CD8-positive, alpha-beta T cell (primary cell): ENCODE measurements at regions of chr11 and their contacts with region 1.

Region 1: DNA sequence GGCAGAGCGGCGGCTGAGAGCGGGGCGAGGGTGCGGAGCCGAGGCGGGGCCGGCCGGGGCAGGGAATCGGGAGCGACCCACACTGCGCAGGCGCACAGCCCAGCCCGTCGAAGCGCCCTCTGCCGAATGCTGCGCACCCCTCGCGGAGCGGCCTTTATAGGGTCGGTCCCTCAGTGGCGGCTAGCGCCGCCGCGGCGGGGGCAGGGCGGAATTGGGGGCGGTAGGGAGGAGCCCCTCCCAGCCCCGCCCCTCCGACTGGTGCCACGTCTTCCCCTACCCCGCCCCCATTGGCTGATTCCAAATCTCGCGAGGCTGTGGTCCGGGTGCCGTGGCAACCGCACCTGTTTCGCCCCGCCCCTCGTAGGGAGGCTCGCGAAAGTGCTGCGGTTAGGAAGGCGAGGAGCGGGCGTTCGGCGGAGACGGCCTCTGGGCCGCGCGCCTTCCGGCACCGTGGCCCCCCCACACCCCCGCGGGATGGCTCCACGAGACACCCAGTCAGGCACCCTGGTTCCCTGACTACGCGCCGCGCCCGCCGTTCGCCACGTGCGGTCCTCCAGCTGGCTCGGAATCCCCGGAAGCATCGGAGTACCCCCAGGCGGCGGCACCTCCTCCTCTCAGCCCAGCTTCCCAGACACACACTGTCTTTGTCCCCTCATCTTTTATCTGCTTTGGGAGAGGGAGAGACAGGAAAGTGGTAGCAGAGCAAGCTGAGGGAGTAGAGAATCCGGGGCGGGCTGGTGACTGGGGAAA is at the start of gene EHD1:
- DNase-seq: peak; percentile 99 to 100 (median 100)
- ATAC-seq: peak; percentile 82
- H3K4me3 ChIP-seq: peak within 1 kb of the TSS; percentile 87 to 100
- H3K4me3 Mint-ChIP-seq: peak within 1 kb of the TSS; percentile 95
- H3K27ac ChIP-seq: peak within 1 kb of the TSS; percentile 91 to 96
- H3K27ac Mint-ChIP-seq: peak within 1 kb of the TSS; percentile 97
- H3K4me1 ChIP-seq: peaks cover 57% of the 10 kb centered on the region
- H3K4me1 Mint-ChIP-seq: peaks cover 63% of the 10 kb centered on the region
- H3K27me3 ChIP-seq: no peaks in the 10 kb centered on the region
- H3K27me3 Mint-ChIP-seq: no peaks in the 10 kb centered on the region
- CTCF ChIP-seq: peak; percentile 29
- total RNA-seq, gene EHD1: 187 to 212 TPM

Region 2: DNA sequence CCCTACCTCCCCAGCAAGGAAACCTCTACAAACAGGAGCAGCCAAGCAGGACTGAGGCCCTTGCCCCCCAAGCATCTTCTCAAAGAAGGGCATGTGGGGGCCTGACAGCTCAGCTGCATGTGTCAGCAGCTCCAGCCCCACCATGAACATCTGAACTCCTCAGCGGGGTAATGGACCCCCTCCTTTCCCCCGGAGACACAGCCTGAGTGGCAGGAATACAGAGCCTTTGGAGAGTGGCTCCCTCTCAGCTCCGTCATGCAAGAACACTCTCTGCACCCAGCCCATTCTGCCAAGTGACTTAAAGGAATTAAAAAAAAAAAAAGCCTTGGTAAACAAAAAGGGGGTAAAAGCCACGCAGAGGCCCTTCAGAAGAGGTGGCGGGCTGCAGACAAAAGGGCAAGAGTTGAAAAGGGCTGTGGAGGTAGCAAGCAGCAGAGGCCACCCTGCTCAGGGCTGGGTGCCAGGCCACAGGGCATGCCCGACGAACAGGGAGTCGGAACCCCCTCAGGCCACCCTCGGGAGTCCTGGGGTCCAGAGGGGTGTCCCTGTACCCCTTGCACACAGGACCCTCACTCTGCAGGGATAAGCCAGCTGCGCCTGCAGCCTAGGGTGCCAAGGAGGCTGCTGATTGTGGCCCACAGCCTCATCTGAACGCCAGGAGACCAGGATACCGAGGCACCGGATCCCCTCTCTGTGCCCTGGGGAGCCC is 775.2 kb before region 1 on chr11:
- CTCF ChIA-PET with region 1: no interaction called
- POLR2A ChIA-PET with region 1: no interaction called
- intact Hi-C with region 1: no loop called
- DNase-seq: no peak
- ATAC-seq: no peak
- H3K4me3 ChIP-seq: no peak overlapping the region
- H3K4me3 Mint-ChIP-seq: no peak overlapping the region
- H3K27ac ChIP-seq: no peak overlapping the region
- H3K27ac Mint-ChIP-seq: no peak overlapping the region
- H3K4me1 ChIP-seq: no peaks in the 10 kb centered on the region
- H3K4me1 Mint-ChIP-seq: no peaks in the 10 kb centered on the region
- H3K27me3 ChIP-seq: no peaks in the 10 kb centered on the region
- H3K27me3 Mint-ChIP-seq: no peaks in the 10 kb centered on the region
- CTCF ChIP-seq: no peak

Region 3: DNA sequence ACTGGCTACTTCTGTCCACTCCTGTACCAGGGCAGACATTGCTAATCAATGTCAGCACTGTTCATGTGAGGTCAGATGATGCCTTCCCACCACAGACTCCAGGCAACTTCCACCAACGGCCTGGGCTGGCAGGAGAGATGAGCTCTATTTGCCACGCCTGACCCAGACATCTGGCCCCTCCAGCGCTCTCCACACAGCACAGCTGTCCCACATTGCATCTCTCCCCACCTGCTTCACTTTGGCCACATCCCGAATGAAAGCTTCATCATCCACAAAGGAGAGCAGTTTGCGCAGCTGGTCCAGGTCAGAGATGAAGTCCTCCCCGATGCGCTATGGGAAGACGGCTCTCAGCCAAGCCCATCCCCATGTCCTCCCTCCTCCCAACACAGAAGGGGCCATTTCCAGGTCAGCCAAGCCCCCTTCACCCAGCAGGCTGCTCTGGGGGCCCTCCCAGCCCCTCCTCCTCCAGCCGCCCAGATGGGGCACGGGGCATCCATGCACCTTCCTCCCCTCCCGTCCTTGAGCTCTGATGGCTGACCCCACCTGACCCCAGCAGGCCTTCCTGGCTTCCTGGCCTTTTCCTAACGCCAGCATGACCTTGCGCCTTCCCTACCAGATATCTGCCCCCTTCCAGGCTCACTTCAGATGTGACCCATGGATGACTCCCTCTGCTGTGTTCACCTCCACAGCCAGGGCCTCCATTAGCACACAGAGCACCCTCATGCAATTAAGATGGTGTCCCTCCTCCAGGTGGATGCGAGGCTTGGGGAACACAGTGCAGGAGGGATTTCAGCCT is 126.3 kb before region 1 on chr11:
- CTCF ChIA-PET with region 1: no interaction called
- POLR2A ChIA-PET with region 1: no interaction called
- intact Hi-C with region 1: no loop called
- DNase-seq: no peak
- ATAC-seq: no peak
- H3K4me3 ChIP-seq: no peak overlapping the region
- H3K4me3 Mint-ChIP-seq: no peak overlapping the region
- H3K27ac ChIP-seq: no peak overlapping the region
- H3K27ac Mint-ChIP-seq: no peak overlapping the region
- H3K4me1 ChIP-seq: peaks cover 35% of the 10 kb centered on the region
- H3K4me1 Mint-ChIP-seq: peaks cover 28% of the 10 kb centered on the region
- H3K27me3 ChIP-seq: no peaks in the 10 kb centered on the region
- H3K27me3 Mint-ChIP-seq: no peaks in the 10 kb centered on the region
- CTCF ChIP-seq: no peak

Region 4: GRCh38 chr11:64767344-64768299 is 111.0 kb before region 1 on chr11:
- CTCF ChIA-PET with region 1: interaction called, 3 read pairs
- POLR2A ChIA-PET with region 1: interaction called, 4 read pairs
- intact Hi-C with region 1: loop called in 1 of 2 experiments (anchors 5 kb)
- DNase-seq: peak; percentile 65 to 91 (median 86)
- ATAC-seq: peak; percentile 25
- H3K4me3 ChIP-seq: peak overlapping the region in 1 of 2 experiments; percentile 33
- H3K4me3 Mint-ChIP-seq: peak overlapping the region; percentile 58
- H3K27ac ChIP-seq: peak overlapping the region; percentile 11 to 44
- H3K27ac Mint-ChIP-seq: peak overlapping the region; percentile 94
- H3K4me1 ChIP-seq: peaks cover 96% of the 10 kb centered on the region
- H3K4me1 Mint-ChIP-seq: peaks cover 88% of the 10 kb centered on the region
- H3K27me3 ChIP-seq: no peaks in the 10 kb centered on the region
- H3K27me3 Mint-ChIP-seq: no peaks in the 10 kb centered on the region
- CTCF ChIP-seq: peak; percentile 81

Region 5: DNA sequence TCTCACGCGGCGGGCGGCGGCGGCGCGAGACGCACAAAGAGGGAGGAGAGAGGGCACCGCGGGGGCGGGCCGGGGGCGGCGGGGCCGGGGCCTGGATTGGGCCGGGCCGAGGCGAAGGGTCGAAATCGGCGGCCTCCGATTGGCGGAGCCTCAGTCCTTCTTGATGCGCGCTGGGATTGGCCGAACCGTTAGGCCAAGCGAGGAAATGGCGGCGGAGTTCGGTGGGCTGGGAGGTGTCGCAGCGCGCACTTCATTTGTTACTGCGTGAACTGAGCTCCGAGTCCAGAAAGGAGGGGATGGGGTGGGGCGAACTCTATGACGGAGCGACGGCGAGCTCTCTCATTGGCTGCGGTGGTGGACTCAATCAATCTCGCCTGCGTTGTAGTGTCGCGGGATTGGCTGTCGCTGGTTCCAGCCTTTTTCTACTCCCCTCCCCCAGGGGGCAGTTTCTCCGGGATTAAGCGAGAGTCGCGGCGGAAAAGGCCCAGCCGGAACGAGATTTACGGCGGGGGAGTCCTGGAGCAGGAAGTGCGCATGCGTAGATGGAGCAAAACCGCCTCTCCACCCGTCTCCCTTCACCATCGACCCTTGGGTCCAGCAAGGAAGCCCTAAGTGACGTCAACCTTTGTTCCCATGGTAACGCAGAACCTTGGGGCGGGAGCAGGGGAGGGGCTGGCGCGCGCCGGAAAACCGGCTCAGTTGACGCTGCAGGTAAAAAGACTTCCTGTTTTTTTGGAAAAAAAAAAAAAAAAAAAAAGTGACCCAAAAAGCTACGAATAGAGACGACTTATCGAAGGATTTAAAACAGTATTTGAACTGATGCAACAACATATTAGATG is 99.9 kb before region 1 on chr11 and contains the start of gene SF1:
- CTCF ChIA-PET with region 1: no interaction called
- POLR2A ChIA-PET with region 1: interaction called, 12 read pairs
- intact Hi-C with region 1: loop called (anchors 1 kb)
- DNase-seq: peak; percentile 97 to 100 (median 99)
- ATAC-seq: peak; percentile 82
- H3K4me3 ChIP-seq: peak within 1 kb of the TSS; percentile 70 to 97
- H3K4me3 Mint-ChIP-seq: peak within 1 kb of the TSS; percentile 93
- H3K27ac ChIP-seq: peak within 1 kb of the TSS; percentile 93 to 98
- H3K27ac Mint-ChIP-seq: peak within 1 kb of the TSS; percentile 99
- H3K4me1 ChIP-seq: peaks cover 53% of the 10 kb centered on the region
- H3K4me1 Mint-ChIP-seq: peaks cover 58% of the 10 kb centered on the region
- H3K27me3 ChIP-seq: no peaks in the 10 kb centered on the region
- H3K27me3 Mint-ChIP-seq: no peaks in the 10 kb centered on the region
- CTCF ChIP-seq: no peak
- total RNA-seq, gene SF1: 1,574 to 1,625 TPM

Region 6: GRCh38 chr11:64810271-64810890 is 68.3 kb before region 1 on chr11 and contains the start of gene MEN1:
- CTCF ChIA-PET with region 1: no interaction called
- POLR2A ChIA-PET with region 1: no interaction called
- intact Hi-C with region 1: loop called in 1 of 2 experiments (anchors 1 kb)
- DNase-seq: peak; percentile 49 to 87 (median 75)
- ATAC-seq: peak; percentile 87
- H3K4me3 ChIP-seq: peak within 1 kb of the TSS; percentile 79 to 99
- H3K4me3 Mint-ChIP-seq: peak within 1 kb of the TSS; percentile 95
- H3K27ac ChIP-seq: peak within 1 kb of the TSS; percentile 60 to 92
- H3K27ac Mint-ChIP-seq: peak within 1 kb of the TSS; percentile 94
- H3K4me1 ChIP-seq: peaks cover 14% of the 10 kb centered on the region
- H3K4me1 Mint-ChIP-seq: peaks cover 31% of the 10 kb centered on the region
- H3K27me3 ChIP-seq: no peaks in the 10 kb centered on the region
- H3K27me3 Mint-ChIP-seq: no peaks in the 10 kb centered on the region
- CTCF ChIP-seq: no peak
- total RNA-seq, gene MEN1: 17.6 to 19.1 TPM

Region 7: DNA sequence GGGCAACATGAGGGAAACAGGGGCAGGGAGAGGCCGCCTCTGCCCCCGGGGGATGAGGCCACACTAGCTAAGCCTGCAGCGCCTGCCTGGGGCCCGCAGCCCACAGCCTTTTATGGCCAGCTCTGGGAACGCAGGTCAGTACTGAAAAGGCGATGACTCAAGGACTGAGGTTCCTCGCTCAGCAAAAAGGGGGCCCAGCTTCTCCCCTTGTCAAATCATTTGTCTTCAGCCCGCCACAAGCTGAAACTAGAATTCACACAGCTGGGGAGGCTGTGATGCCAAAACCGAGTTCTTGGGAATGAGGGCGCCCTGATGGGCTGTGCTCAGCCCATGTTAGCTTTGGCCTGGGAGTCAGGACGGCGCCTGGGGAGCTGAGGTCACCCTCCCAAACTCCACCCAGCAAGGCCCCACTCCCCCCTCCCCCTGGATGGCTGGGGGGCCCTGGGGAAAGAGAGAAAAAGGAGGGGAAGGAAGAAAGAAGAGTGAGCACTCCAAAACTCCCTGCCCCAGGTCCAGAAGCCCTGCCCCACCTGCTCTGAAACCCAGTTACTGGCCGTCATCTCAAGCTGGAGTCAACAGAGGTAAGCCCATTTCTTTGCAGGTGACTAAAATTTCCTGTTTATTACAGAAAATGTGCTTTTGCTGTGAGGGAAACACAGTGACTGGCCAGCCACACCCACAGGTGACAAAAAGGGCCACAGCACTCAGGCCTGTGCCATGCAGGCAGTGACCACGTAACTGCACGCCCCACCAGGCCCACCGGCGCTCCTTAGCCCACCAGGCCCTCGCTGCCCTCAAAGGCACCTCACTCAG is 14.0 kb before region 1 on chr11:
- CTCF ChIA-PET with region 1: interaction called, 1,398 read pairs
- POLR2A ChIA-PET with region 1: interaction called, 810 read pairs
- intact Hi-C with region 1: loop called (anchors 1 kb)
- DNase-seq: peak in 4 of 9 experiments; percentile 19 to 61 (median 48)
- ATAC-seq: peak; percentile 10
- H3K4me3 ChIP-seq: peak overlapping the region; percentile 36 to 41
- H3K4me3 Mint-ChIP-seq: peak overlapping the region; percentile 71
- H3K27ac ChIP-seq: peak overlapping the region; percentile 57 to 87
- H3K27ac Mint-ChIP-seq: peak overlapping the region; percentile 95
- H3K4me1 ChIP-seq: peaks cover 96% of the 10 kb centered on the region
- H3K4me1 Mint-ChIP-seq: peaks cover 88% of the 10 kb centered on the region
- H3K27me3 ChIP-seq: no peaks in the 10 kb centered on the region
- H3K27me3 Mint-ChIP-seq: no peaks in the 10 kb centered on the region
- CTCF ChIP-seq: no peak

Region 8: DNA sequence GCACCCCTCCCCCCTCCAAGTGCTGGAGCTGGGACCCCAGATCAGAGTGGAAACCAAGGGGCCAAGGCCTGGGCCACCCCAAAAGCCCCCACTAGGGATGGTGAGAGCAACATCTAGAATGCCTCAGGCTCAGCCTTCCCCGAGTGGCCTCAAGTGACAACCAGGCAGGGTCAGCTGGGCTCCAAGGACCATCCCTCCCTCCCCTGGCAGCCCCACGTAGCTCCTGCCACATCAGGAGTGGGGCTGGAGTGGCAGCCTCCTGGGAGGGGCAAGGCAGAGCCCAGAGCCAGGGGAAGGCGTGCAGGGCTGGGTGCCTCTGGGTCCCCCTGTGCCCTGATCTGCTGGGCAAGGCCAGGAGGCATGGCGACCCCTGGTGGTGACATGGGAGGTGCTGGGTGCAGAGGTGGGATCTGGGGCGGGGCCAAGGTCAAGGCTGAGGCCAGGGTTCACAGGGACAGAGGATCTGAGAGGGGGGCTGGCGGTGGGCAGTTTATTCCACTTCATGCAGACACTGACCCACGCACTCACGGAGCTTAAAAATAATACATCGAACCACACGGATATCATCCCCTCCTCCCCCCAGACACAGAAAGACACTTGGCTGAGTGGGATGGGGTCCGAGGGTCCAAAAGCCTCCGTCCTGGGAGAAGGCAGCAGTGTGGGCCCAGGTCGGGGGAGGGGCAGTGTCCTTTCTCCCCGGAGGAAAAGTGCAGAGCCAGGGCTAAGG is 15.6 kb after region 1 on chr11:
- CTCF ChIA-PET with region 1: interaction called, 42 read pairs
- POLR2A ChIA-PET with region 1: interaction called, 8 read pairs
- intact Hi-C with region 1: loop called in 1 of 2 experiments (anchors 2 kb)
- DNase-seq: peak; percentile 85 to 97 (median 92)
- ATAC-seq: peak; percentile 86
- H3K4me3 ChIP-seq: no peak overlapping the region
- H3K4me3 Mint-ChIP-seq: no peak overlapping the region
- H3K27ac ChIP-seq: no peak overlapping the region
- H3K27ac Mint-ChIP-seq: no peak overlapping the region
- H3K4me1 ChIP-seq: peaks cover 4% of the 10 kb centered on the region
- H3K4me1 Mint-ChIP-seq: peaks cover 2% of the 10 kb centered on the region
- H3K27me3 ChIP-seq: no peaks in the 10 kb centered on the region
- H3K27me3 Mint-ChIP-seq: no peaks in the 10 kb centered on the region
- CTCF ChIP-seq: peak; percentile 69